T-cell (primary cell): ENCODE measurements at regions of chr5 and their contacts with region 1.

Region 1: GRCh38 chr5:180586870-180587269 is 4.4 kb downstream of the SCGB3A1 start:
- DNase-seq: no peak
- ATAC-seq: no peak
- H3K4me3 ChIP-seq: no peak overlapping the region
- H3K4me3 Mint-ChIP-seq: no peak overlapping the region
- H3K27ac ChIP-seq: no peak overlapping the region
- H3K27ac Mint-ChIP-seq: no peak overlapping the region
- H3K4me1 ChIP-seq: peaks cover 5 to 12% of the 10 kb centered on the region in 2 experiments
- H3K4me1 Mint-ChIP-seq: peaks cover 0 to 6% (median 5%) of the 10 kb centered on the region in 3 donors
- H3K27me3 ChIP-seq: peaks cover under 1 to 32% of the 10 kb centered on the region in 2 experiments
- H3K27me3 Mint-ChIP-seq: peaks cover 10 to 19% of the 10 kb centered on the region in 2 donors

Region 2: DNA sequence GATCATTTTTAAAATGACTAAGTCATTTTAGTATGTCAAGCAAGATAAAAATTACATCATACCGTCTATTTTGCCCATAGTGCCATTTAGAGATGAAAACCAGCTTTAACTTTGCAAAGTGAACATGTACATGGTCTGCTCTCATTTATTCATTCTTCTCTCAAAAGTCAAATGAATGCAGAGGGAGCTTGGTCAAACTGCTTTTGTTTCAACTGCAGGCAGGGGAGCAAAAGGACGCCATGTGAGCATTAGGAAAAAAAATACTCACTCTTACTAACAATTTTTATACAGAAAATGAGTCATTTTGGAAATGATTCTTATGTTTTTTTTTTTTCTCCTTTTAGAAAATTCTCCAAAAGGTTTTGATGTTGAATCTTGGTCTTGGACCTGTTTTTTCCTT is 11.3 kb before region 1 on chr5:
- CTCF ChIA-PET with region 1: no interaction called
- POLR2A ChIA-PET with region 1: interaction called in 1 of 2 experiments, 11 read pairs
- DNase-seq: no peak
- ATAC-seq: no peak
- H3K4me3 ChIP-seq: no peak overlapping the region
- H3K4me3 Mint-ChIP-seq: no peak overlapping the region
- H3K27ac ChIP-seq: no peak overlapping the region
- H3K27ac Mint-ChIP-seq: no peak overlapping the region
- H3K4me1 ChIP-seq: no peaks in the 10 kb centered on the region
- H3K4me1 Mint-ChIP-seq: no peaks in the 10 kb centered on the region
- H3K27me3 ChIP-seq: no peaks in the 10 kb centered on the region
- H3K27me3 Mint-ChIP-seq: no peaks in the 10 kb centered on the region

Region 3: DNA sequence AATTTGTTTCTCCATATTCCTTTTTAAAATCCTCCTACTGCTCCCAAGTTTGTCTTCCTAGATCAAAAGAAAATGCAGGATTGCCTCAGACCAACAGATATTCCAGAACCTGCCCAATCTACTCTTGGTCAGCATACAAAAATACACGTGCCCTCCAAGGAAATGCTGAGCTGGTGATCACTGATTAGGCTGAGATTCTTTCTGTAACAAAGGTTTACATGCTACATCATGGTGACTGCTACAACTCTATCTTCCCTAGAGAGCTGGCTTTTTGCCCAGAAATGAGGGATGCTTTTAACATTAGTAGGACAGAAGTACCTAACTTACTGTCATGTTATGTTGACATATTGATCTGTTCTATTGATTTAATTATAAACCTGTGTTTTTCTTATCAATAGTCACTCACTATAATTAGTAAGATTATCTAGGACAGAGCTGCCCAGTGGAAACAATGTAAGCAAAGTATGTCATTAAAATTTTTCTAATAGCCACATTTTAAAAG is 117.5 kb after region 1 on chr5:
- CTCF ChIA-PET with region 1: no interaction called
- POLR2A ChIA-PET with region 1: no interaction called
- DNase-seq: no peak
- ATAC-seq: no peak
- H3K4me3 ChIP-seq: no peak overlapping the region
- H3K4me3 Mint-ChIP-seq: no peak overlapping the region
- H3K27ac ChIP-seq: no peak overlapping the region
- H3K27ac Mint-ChIP-seq: no peak overlapping the region
- H3K4me1 ChIP-seq: no peaks in the 10 kb centered on the region
- H3K4me1 Mint-ChIP-seq: peaks cover 0 to 6% (median 0%) of the 10 kb centered on the region in 3 donors
- H3K27me3 ChIP-seq: no peaks in the 10 kb centered on the region
- H3K27me3 Mint-ChIP-seq: peaks cover 0 to 2% of the 10 kb centered on the region in 2 donors